AG04449 (cell line): ENCODE measurements at regions of chr1 and their contacts with region 1.

Region 1: GRCh38 chr1:214637722-214638458 is 34.9 kb downstream of the CENPF start:
- DNase-seq: no peak
- H3K4me3 ChIP-seq: no peak overlapping the region
- CTCF ChIP-seq: peak; percentile 57

Region 2: GRCh38 chr1:214615871-214616270 is 22.0 kb before region 1 on chr1:
- CTCF ChIA-PET with region 1: interaction called, 11 read pairs
- POLR2A ChIA-PET with region 1: no interaction called
- DNase-seq: no peak
- H3K4me3 ChIP-seq: no peak overlapping the region
- CTCF ChIP-seq: no peak

Region 3: DNA sequence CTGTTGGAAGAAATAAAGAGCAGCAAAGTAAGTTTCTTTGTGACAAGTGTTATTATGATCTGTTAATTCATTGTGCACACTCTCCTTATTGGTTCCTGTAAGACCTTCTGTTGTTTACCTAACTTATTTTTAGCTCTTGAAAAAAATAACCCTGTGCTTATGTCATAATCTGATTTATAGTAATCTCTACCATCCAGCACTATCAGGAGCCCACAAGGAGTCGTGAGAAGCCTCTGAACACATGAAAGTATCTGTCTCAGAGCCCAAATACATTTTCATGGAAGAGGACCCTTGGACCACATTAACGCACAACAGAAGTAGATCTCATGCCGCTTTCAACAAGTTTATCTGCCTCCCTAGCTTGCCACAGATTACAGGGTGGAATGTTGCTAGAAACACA is 10.9 kb after region 1 on chr1:
- CTCF ChIA-PET with region 1: interaction called, 72 read pairs
- POLR2A ChIA-PET with region 1: no interaction called
- DNase-seq: no peak
- H3K4me3 ChIP-seq: no peak overlapping the region
- CTCF ChIP-seq: no peak

Region 4: GRCh38 chr1:215146341-215146826 is 508.5 kb after region 1 on chr1:
- CTCF ChIA-PET with region 1: interaction called, 20 read pairs
- POLR2A ChIA-PET with region 1: no interaction called
- DNase-seq: no peak
- H3K4me3 ChIP-seq: no peak overlapping the region
- CTCF ChIP-seq: peak; percentile 44